BJ (cell line): ENCODE measurements at regions of chr6 and their contacts with region 1.

Region 1: DNA sequence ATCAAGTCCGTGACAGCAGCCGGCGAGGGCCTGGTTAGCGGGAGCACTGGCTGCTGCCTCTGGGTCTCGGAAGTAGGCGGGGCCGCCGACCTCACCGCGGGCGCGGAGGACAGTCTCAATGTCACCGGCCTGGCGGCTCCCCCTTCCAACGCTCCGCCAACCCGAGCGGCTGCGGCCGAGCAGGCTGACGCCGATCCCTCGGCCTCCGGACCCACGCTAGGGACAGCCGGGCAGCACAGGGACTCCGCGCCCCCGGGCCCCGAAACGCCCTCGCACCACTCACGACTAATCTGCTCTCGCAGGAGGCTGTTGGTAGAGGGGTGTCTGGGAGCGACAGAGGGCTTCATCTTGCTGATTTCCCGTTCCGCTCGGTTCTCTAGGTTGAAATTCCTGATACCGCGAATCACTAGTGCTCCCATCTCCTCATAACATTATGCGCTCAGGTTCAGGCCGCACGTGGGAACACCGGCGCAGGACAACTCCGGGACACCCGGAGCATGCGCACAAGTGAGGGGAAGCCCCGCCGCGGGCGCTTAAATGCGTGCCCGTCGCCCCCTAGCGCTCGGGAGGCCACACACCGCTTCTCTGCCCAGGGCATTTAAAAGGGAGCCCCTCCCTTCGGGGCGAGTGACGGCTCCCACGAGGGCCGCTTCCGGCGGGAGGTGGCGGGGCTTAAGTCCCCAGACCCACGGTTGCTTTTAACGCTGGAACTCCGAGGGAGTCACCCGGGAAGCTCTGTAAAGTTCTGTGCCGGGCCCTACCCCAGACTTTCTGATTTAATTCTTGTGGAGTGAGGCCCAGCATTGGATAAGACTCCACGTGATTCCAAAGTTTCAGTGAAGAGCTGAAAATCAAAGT is at the start of gene NDUFAF4:
- DNase-seq: peak; percentile 59
- H3K4me3 ChIP-seq: peak within 1 kb of the TSS; percentile 87
- H3K27me3 ChIP-seq: no peaks in the 10 kb centered on the region
- CTCF ChIP-seq: peak; percentile 96
- polyA plus RNA-seq, gene NDUFAF4: 15.4 and 22.8 TPM in 2 replicates

Region 2: DNA sequence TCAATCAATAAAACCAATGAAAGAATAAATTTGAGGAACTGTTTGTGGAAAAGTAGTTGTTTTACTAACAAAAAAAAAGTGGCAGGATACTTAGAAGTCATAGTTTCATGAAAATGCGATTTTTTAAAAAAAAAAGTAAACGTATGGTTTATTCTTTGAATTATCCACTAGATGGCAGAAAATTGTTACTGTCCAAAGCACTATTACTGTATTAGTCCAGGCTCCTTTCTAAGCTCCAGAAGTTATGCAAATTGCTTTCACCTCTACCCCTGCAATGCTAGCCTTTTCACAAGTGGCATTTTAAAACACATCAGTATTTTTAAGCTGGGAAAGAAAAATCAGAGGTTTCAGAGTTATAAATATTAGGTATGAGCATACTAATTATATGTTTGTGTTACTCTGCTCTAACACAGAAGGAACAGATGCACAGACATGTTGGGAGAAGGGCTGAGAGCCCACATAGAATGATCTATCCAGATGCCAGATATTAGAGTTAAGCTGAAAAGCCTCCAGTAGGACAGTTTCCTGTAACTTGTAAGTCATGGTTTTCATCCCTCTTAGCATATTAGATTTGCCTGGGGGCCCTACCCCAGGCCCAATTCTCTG is 270.8 kb before region 1 on chr6:
- CTCF ChIA-PET with region 1: interaction called, 12 read pairs
- POLR2A ChIA-PET with region 1: no interaction called
- DNase-seq: peak; percentile 3
- H3K4me3 ChIP-seq: no peak overlapping the region
- H3K27me3 ChIP-seq: no peaks in the 10 kb centered on the region
- CTCF ChIP-seq: peak; percentile 24

Region 3: GRCh38 chr6:96856856-96857255 is 40.8 kb before region 1 on chr6:
- CTCF ChIA-PET with region 1: no interaction called
- POLR2A ChIA-PET with region 1: no interaction called
- DNase-seq: no peak
- H3K4me3 ChIP-seq: no peak overlapping the region
- H3K27me3 ChIP-seq: no peaks in the 10 kb centered on the region
- CTCF ChIP-seq: no peak

Region 4: GRCh38 chr6:97059473-97059872 is 161.9 kb after region 1 on chr6:
- CTCF ChIA-PET with region 1: interaction called, 50 read pairs
- POLR2A ChIA-PET with region 1: no interaction called
- DNase-seq: no peak
- H3K4me3 ChIP-seq: no peak overlapping the region
- H3K27me3 ChIP-seq: peaks cover 5% of the 10 kb centered on the region; the same call in 1 of the 2 replicates
- CTCF ChIP-seq: peak; percentile 51